Heart right ventricle (tissue), 16 donors: ENCODE measurements at regions of chrX and their contacts with region 1.

Region 1: DNA sequence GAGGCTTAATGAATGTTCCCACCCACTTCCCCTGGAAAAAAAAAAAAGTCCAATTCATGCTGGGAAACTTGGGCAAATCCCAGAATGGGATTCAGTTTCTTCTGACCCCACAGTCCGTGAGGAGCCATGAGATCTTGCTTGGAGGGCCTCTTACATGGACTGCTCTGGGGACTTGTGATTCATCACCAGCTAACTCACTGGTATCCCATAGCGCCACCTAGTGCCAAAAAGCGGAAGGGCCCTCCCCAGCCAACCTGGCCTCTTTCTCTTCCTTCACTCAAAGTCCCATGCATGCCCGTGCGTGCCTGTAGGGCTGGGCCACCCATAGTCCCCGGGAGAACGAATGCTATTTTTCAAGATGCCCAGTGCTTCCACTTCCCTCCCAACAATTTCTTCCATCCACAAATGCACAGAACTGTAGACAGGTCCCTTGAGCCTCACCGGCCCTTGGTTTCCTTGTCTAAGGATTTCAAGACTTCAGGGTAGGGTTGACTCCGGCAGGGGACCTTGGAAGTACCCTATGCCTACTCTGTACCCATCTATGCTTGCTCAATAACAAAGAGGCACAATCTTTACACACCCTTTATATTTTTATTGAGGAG is 5.1 kb downstream of the RTL5 start:
- DNase-seq: peak; percentile 81 to 87
- ATAC-seq: peak; percentile 80 to 90 (median 86)
- H3K4me3 ChIP-seq: no peak overlapping the region
- H3K27ac ChIP-seq: peak overlapping the region in 8 of 10 donors; percentile 35 to 74 (median 65)
- H3K4me1 ChIP-seq: peaks cover 5 to 79% (median 48%) of the 10 kb centered on the region in 9 donors
- H3K27me3 ChIP-seq: peaks cover 0 to 46% (median 0%) of the 10 kb centered on the region in 7 donors
- CTCF ChIP-seq: peak; percentile 61 to 88 (median 81)

Region 2: GRCh38 chrX:71910986-71911730 is 215.5 kb before region 1 on chrX:
- intact Hi-C with region 1: loop called in 1 of 10 experiments (anchors 10 kb)
- DNase-seq: peak in 1 of 2 donors; percentile 15
- ATAC-seq: peak; percentile 19 to 75 (median 60)
- H3K4me3 ChIP-seq: peak overlapping the region; percentile 3 to 55 (median 48)
- H3K27ac ChIP-seq: peak overlapping the region in 8 of 10 donors; percentile 17 to 72 (median 44)
- H3K4me1 ChIP-seq: peaks cover 0 to 5% (median 0%) of the 10 kb centered on the region in 9 donors
- H3K27me3 ChIP-seq: peaks cover 0 to 99% (median 13%) of the 10 kb centered on the region in 7 donors
- CTCF ChIP-seq: peak in 6 of 9 donors; percentile 11 to 40 (median 28)

Region 3: DNA sequence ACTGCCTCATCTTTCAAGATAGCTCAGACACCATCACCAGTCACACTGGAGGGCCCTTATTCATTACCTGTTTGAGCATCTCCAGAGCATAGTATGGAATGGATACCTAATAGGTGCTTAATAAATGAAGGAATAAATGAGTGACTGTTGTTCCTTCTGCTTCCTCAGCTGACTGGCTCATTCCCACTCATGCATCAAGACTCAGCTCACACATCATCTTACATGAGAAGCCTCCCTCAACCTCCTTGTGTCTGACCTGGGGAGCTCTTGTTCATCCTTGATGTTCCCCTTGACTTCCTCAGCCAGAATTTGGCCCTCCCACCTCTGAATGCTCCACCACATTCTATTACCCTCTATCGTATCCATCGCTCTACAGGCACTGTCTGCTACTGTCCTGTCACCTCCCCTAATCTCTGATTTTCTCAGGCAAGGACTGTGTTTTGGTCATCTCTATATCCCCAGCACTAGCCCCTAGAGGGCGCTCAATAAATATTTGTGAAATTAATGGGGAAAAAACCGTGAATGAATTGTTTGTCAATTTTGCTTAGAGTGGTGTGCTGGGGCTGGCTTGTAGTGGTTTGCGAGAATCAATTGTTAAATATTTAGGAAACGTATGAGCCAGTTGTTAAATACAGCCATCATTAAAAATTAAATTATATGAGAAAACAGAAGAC is 127.7 kb before region 1 on chrX:
- intact Hi-C with region 1: loop called in 6 of 10 experiments (anchors 2 to 5 kb)
- DNase-seq: peak in 1 of 2 donors; percentile 19
- ATAC-seq: peak in 1 of 8 donors; percentile 45
- H3K4me3 ChIP-seq: no peak overlapping the region
- H3K27ac ChIP-seq: no peak overlapping the region
- H3K4me1 ChIP-seq: peaks cover 0 to 20% (median 6%) of the 10 kb centered on the region in 9 donors
- H3K27me3 ChIP-seq: peaks cover 0 to 48% (median 0%) of the 10 kb centered on the region in 7 donors
- CTCF ChIP-seq: peak in 8 of 9 donors; percentile 21 to 68 (median 60)

Region 4: DNA sequence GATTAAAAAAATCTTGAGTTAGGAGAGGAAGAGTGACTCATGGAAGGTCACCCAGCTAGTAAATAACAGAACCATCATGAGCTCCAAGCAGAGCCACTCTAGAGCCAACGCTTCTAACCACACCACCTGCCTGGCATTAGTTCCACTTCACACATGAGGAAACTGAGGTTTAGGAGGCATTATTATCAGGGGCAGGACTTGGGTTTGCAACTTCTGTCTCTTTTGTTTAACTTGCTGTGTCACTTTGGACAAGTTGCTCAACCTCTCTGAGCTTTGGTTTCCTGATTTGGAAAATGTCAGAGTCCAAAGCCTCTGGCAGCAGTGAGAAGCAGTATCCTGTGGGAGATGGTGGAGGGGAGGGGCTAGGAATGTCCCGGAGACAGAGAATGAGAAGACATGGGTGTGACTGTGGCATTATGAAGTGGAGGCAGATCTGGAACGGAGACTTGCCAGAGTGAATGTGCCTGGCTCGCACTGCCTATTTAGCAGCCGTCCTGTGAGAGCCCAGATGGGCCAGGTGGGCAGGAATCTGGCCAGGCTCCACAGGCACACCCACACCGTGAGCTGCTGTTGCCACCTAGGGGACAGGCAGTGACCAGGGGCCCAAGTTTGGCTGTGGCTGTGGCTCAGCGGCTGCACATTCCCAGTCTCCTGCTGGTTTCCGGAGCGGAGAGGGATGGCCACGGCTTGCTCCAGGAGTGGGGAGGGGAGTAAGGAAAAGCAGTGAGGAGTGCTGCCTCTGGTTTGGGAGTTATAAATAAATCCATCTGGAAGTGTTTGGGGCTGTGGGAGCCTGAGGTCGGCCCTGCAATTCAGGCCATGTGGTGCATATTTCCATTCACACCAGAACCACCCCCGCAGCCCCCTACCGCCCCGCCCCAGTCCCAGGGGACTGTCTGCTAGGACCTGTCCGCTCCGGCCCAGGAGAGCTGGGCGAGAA is 122.6 kb before region 1 on chrX:
- intact Hi-C with region 1: loop called in 6 of 10 experiments (anchors 2 to 5 kb)
- DNase-seq: peak; percentile 33 to 48
- ATAC-seq: peak; percentile 80 to 91 (median 85)
- H3K4me3 ChIP-seq: peak overlapping the region in 2 of 10 donors; percentile 5 to 11
- H3K27ac ChIP-seq: peak overlapping the region in 7 of 10 donors; percentile 14 to 74 (median 67)
- H3K4me1 ChIP-seq: peaks cover 0 to 20% (median 8%) of the 10 kb centered on the region in 9 donors
- H3K27me3 ChIP-seq: peaks cover 0 to 55% (median 0%) of the 10 kb centered on the region in 7 donors
- CTCF ChIP-seq: peak in 4 of 9 donors; percentile 14 to 32 (median 23)

Region 5: DNA sequence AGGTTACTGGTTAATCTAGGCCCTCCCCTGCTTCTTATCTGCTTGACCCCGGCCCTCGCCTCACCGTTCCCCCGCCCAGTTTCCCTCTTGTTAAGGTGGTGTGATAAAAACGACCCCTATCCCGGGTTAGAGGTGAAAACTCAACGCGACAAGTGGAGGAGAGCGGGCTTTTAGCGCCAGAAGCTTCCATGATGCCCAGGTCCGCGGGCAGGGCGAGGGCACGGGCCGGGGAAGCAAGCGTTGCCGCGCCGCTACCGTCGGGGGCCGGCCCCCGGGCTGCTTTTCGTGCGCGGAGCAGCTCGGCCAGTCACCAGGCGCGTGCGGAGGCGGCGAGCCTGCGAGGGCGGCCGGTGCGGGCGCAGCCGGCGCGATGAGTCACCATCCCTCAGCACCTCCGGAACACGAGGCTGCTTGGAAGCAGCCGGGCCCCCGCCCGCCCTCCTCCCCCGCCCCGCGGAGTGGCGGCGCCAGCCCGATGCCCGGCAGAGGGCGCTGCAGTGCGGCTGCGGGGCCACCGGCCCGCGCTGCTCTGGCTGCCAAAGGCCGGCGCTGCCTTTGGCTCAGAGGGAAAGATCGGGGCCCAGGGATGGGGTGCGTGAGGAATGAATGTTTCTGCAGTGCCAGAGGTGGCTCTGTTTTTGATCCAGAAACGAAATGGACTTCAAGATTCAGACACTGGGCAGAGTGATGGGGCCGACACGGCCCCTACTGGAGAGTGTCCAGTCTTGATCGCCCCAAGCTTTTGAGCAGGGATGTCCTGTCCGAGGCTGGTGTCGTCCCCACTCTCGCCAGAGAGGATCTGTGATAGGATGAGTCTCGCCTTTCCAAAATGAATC is 108.1 kb before region 1 on chrX:
- intact Hi-C with region 1: loop called (anchors 1 to 5 kb)
- DNase-seq: peak; percentile 82 to 86
- ATAC-seq: peak; percentile 93 to 99 (median 98)
- H3K4me3 ChIP-seq: peak overlapping the region in 5 of 10 donors; percentile 20 to 45 (median 28)
- H3K27ac ChIP-seq: peak overlapping the region in 7 of 10 donors; percentile 34 to 66 (median 53)
- H3K4me1 ChIP-seq: peaks cover 0 to 24% (median 6%) of the 10 kb centered on the region in 9 donors
- H3K27me3 ChIP-seq: peaks cover 0 to 83% (median 0%) of the 10 kb centered on the region in 7 donors
- CTCF ChIP-seq: peak; percentile 61 to 89 (median 77)

Region 6: DNA sequence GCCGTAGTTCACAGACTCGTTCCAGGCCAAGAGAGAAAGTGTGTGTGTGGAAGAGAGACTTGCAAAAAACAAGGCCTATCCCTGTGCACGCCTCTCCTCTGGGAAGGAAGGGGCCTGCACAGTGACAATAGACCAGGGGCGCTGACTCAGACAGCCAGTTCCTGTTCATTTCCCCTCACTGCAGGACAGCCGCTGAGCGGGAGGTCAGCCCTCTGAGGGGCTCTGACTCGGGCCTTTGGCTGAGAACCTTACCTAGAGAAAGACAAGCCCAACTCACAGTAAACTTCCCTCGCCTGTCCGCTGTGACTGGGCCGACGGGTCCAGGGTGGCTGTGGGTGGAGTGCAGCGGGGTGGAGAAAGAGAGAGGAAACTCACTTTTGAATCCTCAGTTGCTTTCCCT is 47.0 kb before region 1 on chrX:
- intact Hi-C with region 1: loop called in 3 of 10 experiments (anchors 5 to 10 kb)
- DNase-seq: peak; percentile 47 to 62
- ATAC-seq: peak; percentile 81 to 96 (median 91)
- H3K4me3 ChIP-seq: peak overlapping the region in 9 of 10 donors; percentile 22 to 52 (median 43)
- H3K27ac ChIP-seq: peak overlapping the region; percentile 18 to 85 (median 73)
- H3K4me1 ChIP-seq: peaks cover 0 to 37% (median 10%) of the 10 kb centered on the region in 9 donors
- H3K27me3 ChIP-seq: peaks cover 0 to 66% (median 0%) of the 10 kb centered on the region in 7 donors
- CTCF ChIP-seq: no peak

Region 7: GRCh38 chrX:72181178-72182125 is 54.8 kb after region 1 on chrX and contains the start of gene PIN4:
- intact Hi-C with region 1: loop called in 1 of 10 experiments (anchors 5 kb)
- DNase-seq: peak; percentile 83 to 94
- ATAC-seq: peak; percentile 97 to 99 (median 98)
- H3K4me3 ChIP-seq: peak within 1 kb of the TSS; percentile 52 to 84 (median 72)
- H3K27ac ChIP-seq: peak within 1 kb of the TSS; percentile 69 to 87 (median 84)
- H3K4me1 ChIP-seq: peaks cover 0 to 17% (median 11%) of the 10 kb centered on the region in 9 donors
- H3K27me3 ChIP-seq: no peaks in the 10 kb centered on the region
- CTCF ChIP-seq: no peak
- total RNA-seq, gene PIN4: 6.9 to 15.6 (median 10.5) TPM